ENCODE measurements at regions of chr15 and their contacts with region 1.

Region 1: GRCh38 chr15:83559310-83559966 is 94.5 kb upstream of the ADAMTSL3 start:
- DNase-seq: peak; percentile 43 to 93 (median 80)

Region 2: GRCh38 chr15:83446904-83447709 is 112.3 kb before region 1 on chr15 and contains the start of gene SH3GL3:
- intact Hi-C with region 1: loop called (anchors 5 kb)
- DNase-seq: peak; percentile 88 to 97 (median 93)

Region 3: DNA sequence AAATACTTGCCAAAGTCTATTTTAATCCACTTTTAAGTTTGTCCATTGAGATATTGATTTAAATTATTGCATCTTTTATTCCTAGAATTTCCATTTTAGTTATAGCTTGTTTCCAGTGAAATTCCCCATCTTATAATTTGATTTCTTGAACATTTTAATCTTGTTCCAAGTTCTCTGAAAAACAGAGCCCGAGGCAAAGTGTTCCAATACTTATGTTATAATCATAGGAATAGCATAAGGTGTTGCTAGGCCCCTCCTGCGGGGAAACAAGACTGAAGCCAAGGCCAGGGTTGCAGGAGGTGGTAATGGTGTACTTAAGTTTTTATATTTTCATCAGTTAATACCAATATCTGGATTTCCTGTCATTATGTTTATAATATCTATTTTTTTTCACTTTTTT is 321.1 kb after region 1 on chr15:
- intact Hi-C with region 1: no loop called
- DNase-seq: no peak